ENCODE measurements at regions of chr21 and their contacts with region 1.

Region 1: GRCh38 chr21:16454399-16454798 is 724.6 kb downstream of the USP25 start:
- DNase-seq: no peak
- H3K4me3 Mint-ChIP-seq: no peak overlapping the region
- H3K27ac Mint-ChIP-seq: no peak overlapping the region
- H3K4me1 Mint-ChIP-seq: no peaks in the 10 kb centered on the region
- H3K27me3 Mint-ChIP-seq: no peaks in the 10 kb centered on the region
- CTCF ChIP-seq: no peak

Region 2: DNA sequence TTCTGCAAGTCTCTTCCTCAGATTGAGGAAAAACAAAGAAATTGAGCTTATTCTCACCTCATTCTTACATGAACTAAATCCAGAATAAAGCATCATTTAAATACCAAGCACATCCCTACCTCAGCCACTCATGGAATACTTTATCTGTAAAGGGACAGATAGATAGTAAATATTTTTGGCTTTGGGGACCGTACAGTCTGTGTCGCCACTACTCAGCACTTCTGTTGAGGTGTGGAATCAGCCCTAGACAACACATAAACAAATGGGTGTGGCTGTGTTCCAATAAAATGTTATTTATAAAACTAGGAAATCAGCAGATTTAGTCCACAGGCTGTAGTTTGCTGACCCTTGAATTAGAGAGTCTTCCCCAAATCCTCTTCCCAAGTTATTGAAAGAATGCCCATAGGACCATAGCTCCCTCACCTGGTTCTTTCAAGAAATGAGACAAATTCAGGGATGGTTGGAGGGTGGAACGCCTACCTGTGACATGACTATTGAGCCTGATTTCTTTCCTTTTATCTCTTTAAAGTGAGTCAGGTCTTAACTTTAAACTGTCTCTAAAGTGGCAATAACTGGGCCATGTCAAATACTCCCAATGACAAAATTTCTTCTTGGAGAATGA is 153.9 kb after region 1 on chr21:
- CTCF ChIA-PET with region 1: no interaction called
- intact Hi-C with region 1: loop called (anchors 1 kb)
- DNase-seq: no peak
- H3K4me3 Mint-ChIP-seq: no peak overlapping the region
- H3K27ac Mint-ChIP-seq: no peak overlapping the region
- H3K4me1 Mint-ChIP-seq: no peaks in the 10 kb centered on the region
- H3K27me3 Mint-ChIP-seq: no peaks in the 10 kb centered on the region
- CTCF ChIP-seq: no peak